Sciatic nerve (tissue), 2 donors: ENCODE measurements at regions of chr1 and their contacts with region 1.

Region 1: GRCh38 chr1:66253330-66253921 is 280.5 kb upstream of the SGIP1 start:
- DNase-seq: no peak
- ATAC-seq: peak; percentile 88

Region 2: GRCh38 chr1:64826991-64827390 is 1426.4 kb before region 1 on chr1:
- intact Hi-C with region 1: no loop called
- DNase-seq: no peak
- ATAC-seq: no peak

Region 3: GRCh38 chr1:65319141-65319540 is 934.3 kb before region 1 on chr1:
- intact Hi-C with region 1: no loop called
- DNase-seq: no peak
- ATAC-seq: no peak

Region 4: GRCh38 chr1:66043186-66043585 is 210.2 kb before region 1 on chr1:
- intact Hi-C with region 1: no loop called
- DNase-seq: no peak
- ATAC-seq: no peak

Region 5: DNA sequence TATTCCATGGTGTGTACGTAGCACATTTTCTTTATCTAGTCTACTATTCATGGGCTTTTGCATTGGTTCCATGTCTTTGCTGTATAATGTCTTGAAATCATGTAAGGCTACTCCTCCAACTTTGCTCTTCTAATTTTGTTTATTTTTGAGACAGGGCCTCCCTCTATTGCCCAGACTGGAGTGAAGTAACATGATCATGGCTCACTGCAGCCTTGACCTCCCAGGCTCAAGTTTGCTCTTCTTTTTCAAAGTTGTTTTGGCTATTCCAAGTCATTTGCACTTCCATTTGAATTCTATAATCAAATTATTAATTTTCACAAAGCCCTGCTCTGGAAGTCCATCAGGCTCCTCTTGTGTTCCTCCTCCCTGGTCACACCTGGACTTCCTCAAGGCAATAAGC is 190.4 kb after region 1 on chr1:
- intact Hi-C with region 1: loop called (anchors 5 kb)
- DNase-seq: no peak
- ATAC-seq: peak; percentile 53

Region 6: DNA sequence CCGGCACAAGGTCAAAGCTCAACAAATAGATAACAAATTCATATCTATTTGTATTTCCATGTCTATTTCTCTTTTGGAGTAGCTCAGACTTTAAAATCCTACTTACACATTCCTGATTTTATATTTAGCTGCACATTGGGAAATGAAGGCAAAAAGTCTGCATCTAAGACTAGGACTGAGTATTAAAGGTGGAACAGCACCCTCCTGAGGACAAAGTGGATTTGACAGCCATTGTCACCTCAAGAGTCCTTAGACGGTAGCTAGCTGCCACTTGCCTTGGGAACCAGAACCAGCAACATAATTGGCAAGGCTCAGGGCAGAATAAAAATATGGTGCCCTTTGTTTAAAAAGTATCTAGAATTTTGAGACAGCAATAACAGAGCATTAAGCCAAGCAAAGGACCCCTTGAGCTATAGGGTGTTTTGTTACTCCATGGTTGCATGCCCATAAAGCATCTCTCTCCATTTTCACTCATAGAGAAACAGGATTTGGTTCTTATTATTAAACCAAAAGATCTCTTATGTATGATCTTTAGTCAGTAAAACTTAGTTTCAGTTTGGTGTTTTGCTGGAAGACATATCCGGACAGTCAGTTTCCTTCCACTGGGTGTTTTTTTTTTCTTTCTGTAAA is 250.5 kb after region 1 on chr1:
- intact Hi-C with region 1: loop called (anchors 5 kb)
- DNase-seq: no peak
- ATAC-seq: no peak

Region 7: GRCh38 chr1:67723620-67724019 is 1470.2 kb after region 1 on chr1:
- intact Hi-C with region 1: no loop called
- DNase-seq: no peak
- ATAC-seq: no peak